Activated naive CD4-positive, alpha-beta T cell treated with anti-CD3 and anti-CD28 coated beads for 36 hours (primary cell): ENCODE measurements at regions of chr19 and their contacts with region 1.

Region 1: GRCh38 chr19:57362997-57363705 is at the starts of genes TRAPPC2B and ZNF547:
- DNase-seq: peak; percentile 97
- H3K4me3 Mint-ChIP-seq: peak within 1 kb of the TSS; percentile 85
- H3K27ac Mint-ChIP-seq: peak within 1 kb of the TSS; percentile 89
- H3K4me1 Mint-ChIP-seq: peaks cover 11% of the 10 kb centered on the region
- H3K27me3 Mint-ChIP-seq: no peaks in the 10 kb centered on the region
- total RNA-seq, gene TRAPPC2B: 3.1 to 3.4 TPM
- total RNA-seq, gene ZNF547: 0.84 to 1.3 TPM

Region 2: DNA sequence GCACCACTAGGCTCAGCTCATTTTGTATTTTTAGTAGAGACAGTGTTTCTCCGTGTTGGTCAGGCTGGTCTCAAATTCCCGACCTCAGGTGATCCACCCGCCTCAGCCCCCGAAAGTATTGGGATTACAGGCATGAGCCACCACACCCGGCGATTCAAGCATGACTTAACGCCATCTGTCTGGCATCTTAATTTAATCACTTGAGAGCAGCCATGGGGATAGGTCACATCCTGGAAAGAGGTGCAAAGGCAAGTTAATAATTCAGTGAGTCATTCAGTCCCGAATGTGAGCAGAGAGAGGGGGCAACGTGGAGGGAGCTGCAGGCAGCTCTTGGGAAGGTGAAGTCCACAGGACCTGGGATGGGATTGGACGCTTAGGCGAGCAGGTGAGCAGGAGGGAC is 275.0 kb before region 1 on chr19:
- CTCF ChIA-PET with region 1: no interaction called
- intact Hi-C with region 1: no loop called
- DNase-seq: no peak
- H3K4me3 Mint-ChIP-seq: no peak overlapping the region
- H3K27ac Mint-ChIP-seq: no peak overlapping the region
- H3K4me1 Mint-ChIP-seq: no peaks in the 10 kb centered on the region
- H3K27me3 Mint-ChIP-seq: no peaks in the 10 kb centered on the region

Region 3: GRCh38 chr19:57103573-57104277 is 259.4 kb before region 1 on chr19:
- CTCF ChIA-PET with region 1: no interaction called
- intact Hi-C with region 1: loop called (anchors 10 kb)
- DNase-seq: peak; percentile 67
- H3K4me3 Mint-ChIP-seq: no peak overlapping the region
- H3K27ac Mint-ChIP-seq: no peak overlapping the region
- H3K4me1 Mint-ChIP-seq: peaks cover 2% of the 10 kb centered on the region
- H3K27me3 Mint-ChIP-seq: peaks cover 13% of the 10 kb centered on the region

Region 4: DNA sequence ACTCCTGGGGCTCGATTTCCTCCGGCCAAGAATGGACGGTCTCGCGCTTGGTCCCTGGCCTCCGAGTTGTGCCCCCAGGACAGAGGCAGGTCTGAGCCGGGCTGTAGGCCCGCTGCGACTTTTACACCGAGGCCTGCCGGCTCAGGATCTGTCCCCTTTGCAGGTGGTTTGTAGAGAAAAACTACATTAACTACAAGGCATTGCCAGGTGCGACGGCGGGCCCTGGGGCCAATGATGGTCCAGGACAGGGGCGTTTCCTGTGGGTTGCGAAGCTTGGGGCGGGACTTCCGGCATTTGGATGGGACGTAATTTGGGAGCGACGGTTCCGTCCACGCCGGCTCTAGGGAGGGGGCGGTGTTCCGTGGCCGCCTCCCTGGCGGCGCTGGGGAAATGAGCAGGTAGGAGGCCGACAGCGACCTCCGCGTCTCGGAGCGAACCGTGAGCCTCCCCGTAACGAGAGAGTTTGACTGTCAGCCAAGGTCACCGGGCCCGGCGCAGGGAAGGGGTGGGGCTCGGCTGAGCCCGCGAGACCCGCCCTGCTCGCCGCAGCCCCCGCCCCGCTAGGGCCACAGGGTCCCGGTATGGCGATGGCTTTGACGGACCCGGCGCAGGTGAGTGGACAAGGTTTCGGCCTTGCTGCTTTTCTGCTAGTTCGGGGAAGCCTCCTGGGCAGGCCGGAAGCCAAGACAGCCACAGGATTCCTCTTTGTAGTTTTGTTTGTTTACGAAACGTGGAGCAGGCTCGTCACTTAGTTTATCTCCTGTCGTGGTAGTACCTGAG is 122.7 kb before region 1 on chr19 and contains the start of gene ZNF805:
- CTCF ChIA-PET with region 1: no interaction called
- intact Hi-C with region 1: loop called (anchors 2 kb)
- DNase-seq: peak; percentile 95
- H3K4me3 Mint-ChIP-seq: peak within 1 kb of the TSS; percentile 74
- H3K27ac Mint-ChIP-seq: peak within 1 kb of the TSS; percentile 70
- H3K4me1 Mint-ChIP-seq: peaks cover 22% of the 10 kb centered on the region
- H3K27me3 Mint-ChIP-seq: no peaks in the 10 kb centered on the region
- total RNA-seq, gene ZNF805: 6.0 to 6.5 TPM

Region 5: DNA sequence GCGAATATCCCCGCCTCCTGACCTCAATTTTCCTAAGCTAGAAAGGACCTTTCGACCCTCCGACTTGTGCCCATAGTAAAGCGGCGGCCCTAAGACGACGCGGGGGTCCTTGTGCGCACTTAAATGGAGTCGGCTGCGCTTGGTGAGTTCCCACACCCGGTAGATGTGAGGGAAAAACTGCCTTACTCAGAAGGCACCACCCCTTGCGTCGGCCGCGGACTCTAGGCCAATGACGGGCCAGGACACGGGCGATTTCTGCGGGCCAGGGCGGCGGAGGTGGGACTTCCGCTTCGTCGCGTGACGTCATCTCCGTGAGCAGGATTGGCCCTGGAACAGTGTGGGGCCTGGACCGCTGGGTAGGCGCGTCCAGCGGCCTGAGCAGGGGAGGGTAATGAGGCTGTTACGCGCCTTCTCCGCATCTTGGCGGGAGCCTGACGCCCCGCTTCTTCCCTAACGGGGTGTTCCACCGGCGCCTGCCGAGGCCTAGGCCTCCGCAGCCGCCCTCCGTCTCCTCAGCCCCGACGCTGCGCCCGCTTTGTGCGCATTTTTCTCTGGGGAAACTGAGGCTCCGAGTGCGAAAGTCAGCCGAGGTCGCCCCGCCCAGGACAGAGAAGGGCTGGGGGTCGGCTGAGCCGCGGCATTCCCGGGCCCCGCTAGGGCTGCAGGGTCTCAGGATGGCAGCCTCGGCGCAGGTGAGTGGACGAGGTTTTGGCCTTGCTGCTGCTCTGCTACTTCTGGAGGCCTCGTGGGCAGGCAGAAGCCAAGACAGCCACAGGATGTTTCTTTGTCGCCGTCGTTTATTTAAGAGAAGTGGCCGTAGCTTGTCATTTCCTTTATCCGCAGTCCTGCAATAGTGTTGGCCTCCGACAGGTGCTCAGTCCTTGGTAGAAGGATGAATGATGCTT is 42.7 kb before region 1 on chr19 and contains the start of gene ZNF543:
- CTCF ChIA-PET with region 1: no interaction called
- intact Hi-C with region 1: loop called (anchors 1 kb)
- DNase-seq: peak; percentile 95
- H3K4me3 Mint-ChIP-seq: peak within 1 kb of the TSS; percentile 84
- H3K27ac Mint-ChIP-seq: peak within 1 kb of the TSS; percentile 84
- H3K4me1 Mint-ChIP-seq: peaks cover 21% of the 10 kb centered on the region
- H3K27me3 Mint-ChIP-seq: peaks cover 27% of the 10 kb centered on the region
- total RNA-seq, gene ZNF543: 3.2 to 3.5 TPM

Region 6: DNA sequence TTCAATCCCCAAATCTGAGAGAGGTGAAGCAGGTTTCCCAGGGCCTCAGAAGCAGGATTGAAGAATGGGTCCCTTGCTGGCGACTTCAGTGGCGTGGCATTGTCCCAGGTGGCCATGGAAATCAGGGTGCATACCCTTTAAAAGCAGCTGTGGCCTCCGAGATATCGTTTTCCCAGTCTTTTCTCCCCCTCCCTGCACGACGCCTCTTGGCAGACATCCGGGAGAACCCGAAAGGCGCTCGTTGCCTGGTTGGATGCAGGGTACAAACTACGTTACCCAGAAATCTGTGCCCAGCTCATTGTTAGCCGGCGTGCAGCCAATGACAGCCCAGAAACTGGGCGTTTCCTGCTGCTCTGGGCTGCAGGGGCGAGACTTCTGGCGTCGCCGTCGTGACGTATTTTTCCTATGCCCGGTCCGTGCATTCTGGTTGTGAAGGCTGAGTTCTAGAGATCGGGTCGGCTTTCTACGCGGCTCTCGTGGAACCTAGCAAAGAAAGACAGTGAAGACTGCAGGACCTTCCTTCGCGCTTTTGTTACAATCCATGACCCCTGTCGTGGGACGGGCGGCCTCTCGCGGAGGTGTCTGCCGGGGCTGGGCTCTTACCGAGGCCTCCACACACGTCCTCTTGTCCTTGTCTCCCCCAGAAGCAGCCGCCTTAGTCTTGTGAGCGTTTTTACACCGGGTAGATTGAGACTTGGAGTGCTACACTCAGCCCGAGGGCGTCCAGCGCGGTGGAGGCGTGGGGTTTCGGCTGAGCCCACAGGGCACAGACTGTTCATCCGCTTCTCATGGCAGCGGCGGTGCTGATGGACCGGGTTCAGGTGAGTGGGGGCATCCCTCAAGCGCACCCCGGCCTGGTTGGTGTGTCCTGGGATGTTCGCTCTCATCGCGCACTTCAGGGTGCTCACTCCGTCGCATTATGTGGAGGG is 12.0 kb before region 1 on chr19 and contains the start of gene ZNF304:
- CTCF ChIA-PET with region 1: no interaction called
- intact Hi-C with region 1: loop called (anchors 1 kb)
- DNase-seq: peak; percentile 89
- H3K4me3 Mint-ChIP-seq: peak within 1 kb of the TSS; percentile 88
- H3K27ac Mint-ChIP-seq: peak within 1 kb of the TSS; percentile 72
- H3K4me1 Mint-ChIP-seq: peaks cover 25% of the 10 kb centered on the region
- H3K27me3 Mint-ChIP-seq: no peaks in the 10 kb centered on the region
- total RNA-seq, gene ZNF304: 3.3 to 3.6 TPM

Region 7: DNA sequence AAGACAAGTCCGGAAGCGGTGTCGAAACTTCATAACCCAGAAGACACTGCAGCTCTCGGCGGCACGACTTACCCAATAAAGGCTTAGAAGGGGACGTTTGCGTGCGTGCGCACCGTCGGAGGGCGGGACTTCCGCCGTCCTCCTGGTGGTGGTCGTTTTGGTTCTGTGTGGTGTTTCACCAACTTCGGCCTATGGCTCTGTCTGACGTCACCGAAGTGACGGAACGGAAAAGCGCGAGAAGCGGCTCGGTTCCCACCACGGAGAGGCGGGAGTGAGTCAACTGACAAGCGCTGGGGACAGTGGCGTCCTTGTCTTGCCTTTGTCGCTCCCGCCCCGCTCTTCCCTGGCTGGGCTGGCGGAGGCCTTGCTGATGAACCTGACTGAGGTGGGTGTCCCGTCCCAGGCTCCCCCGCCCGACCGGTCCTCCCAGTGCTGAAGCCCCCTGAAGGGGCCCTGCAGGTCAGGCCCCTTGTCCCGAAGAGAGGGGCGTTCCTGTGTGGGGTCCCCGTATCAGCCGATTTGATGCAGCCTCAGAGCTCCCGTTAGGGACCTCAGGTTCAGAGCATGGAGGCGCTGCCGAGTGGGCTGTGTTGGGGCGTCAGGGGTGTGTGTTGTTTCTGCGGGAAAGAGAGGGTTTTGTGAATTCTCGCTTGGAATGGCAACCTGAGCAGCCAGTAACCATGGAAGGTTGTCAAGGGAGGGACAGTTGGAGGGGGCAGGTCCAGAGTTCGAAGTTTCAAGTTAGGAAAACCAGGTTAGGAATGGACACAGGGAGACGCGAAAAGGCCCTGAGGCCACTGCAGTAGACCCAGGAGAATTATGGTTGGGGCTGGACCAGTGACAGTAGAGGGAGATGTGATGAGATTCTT is 26.8 kb after region 1 on chr19 and contains the start of gene ZNF548:
- CTCF ChIA-PET with region 1: interaction called, 3 read pairs
- intact Hi-C with region 1: loop called (anchors 1 kb)
- DNase-seq: peak; percentile 94
- H3K4me3 Mint-ChIP-seq: peak within 1 kb of the TSS; percentile 88
- H3K27ac Mint-ChIP-seq: peak within 1 kb of the TSS; percentile 87
- H3K4me1 Mint-ChIP-seq: peaks cover 20% of the 10 kb centered on the region
- H3K27me3 Mint-ChIP-seq: no peaks in the 10 kb centered on the region
- total RNA-seq, gene ZNF548: 11.9 to 13.3 TPM

Region 8: GRCh38 chr19:57435062-57435978 is 72.2 kb after region 1 on chr19 and contains the start of gene ZNF749:
- CTCF ChIA-PET with region 1: no interaction called
- intact Hi-C with region 1: loop called (anchors 1 kb)
- DNase-seq: peak; percentile 98
- H3K4me3 Mint-ChIP-seq: peak within 1 kb of the TSS; percentile 93
- H3K27ac Mint-ChIP-seq: peak within 1 kb of the TSS; percentile 70
- H3K4me1 Mint-ChIP-seq: peaks cover 26% of the 10 kb centered on the region
- H3K27me3 Mint-ChIP-seq: no peaks in the 10 kb centered on the region
- total RNA-seq, gene ZNF749: 8.2 to 9.9 TPM

Region 9: DNA sequence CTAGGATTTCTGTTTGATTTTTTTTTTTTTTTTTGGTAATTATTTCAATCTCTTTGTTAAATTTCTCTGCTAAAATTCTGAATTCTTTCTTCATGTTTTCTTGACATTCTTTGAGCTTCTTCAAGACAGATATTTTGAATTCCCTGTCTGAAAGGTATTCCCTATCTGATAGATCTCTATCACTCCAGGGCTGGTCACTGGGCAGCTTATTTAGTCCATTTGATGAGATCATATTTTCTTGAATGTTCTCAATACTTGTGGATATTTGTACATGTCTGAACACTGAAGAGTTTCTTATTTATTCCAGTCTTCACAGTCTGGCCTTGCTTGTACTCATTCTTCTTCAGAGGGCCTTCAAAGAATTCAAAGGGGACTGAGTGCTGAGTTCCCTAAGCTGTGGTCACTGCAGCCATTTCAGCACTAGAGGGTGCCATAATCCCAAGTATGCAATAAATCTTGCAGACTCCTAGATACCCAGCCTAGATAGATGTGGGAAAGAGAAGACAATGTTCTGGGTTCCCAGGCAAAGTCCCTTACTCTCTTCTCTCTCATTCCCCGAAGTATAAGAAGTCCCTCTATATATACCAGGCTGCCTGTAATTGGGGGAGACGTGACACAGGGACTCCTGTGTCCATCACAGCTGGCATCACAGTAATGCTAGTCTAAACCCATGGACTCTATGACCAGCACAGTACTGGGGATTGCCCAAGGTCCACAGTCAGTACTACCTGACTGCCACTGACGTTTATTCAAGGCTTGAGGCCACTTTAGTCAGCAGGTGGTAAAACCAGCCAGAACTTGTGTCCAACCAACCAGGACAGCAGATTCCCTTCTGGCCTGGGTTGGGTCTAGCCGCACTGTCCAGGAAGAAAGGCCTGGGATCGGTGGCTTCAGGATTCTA is 102.6 kb after region 1 on chr19:
- CTCF ChIA-PET with region 1: no interaction called
- intact Hi-C with region 1: no loop called
- DNase-seq: peak; percentile 30
- H3K4me3 Mint-ChIP-seq: no peak overlapping the region
- H3K27ac Mint-ChIP-seq: no peak overlapping the region
- H3K4me1 Mint-ChIP-seq: no peaks in the 10 kb centered on the region
- H3K27me3 Mint-ChIP-seq: no peaks in the 10 kb centered on the region